ENCODE measurements at regions of chr11 and their contacts with region 1.

Region 1: GRCh38 chr11:63768237-63769043 is at the start of gene ZFTA:
- DNase-seq: peak; percentile 75
- ATAC-seq: peak; percentile 6
- H3K4me3 Mint-ChIP-seq: peak within 1 kb of the TSS; percentile 98
- H3K27ac Mint-ChIP-seq: peak within 1 kb of the TSS; percentile 98
- H3K4me1 Mint-ChIP-seq: peaks cover 37% of the 10 kb centered on the region
- H3K27me3 Mint-ChIP-seq: peaks cover 32% of the 10 kb centered on the region
- CTCF ChIP-seq: peak; percentile 78
- total RNA-seq, gene ZFTA: 44.7 to 47.2 TPM (median 45.6 TPM) in 3 replicates

Region 2: GRCh38 chr11:63779039-63779438 is 10.6 kb after region 1 on chr11:
- CTCF ChIA-PET with region 1: interaction called, 10 read pairs
- POLR2A ChIA-PET with region 1: no interaction called
- DNase-seq: no peak
- ATAC-seq: no peak
- H3K4me3 Mint-ChIP-seq: no peak overlapping the region
- H3K27ac Mint-ChIP-seq: no peak overlapping the region
- H3K4me1 Mint-ChIP-seq: no peaks in the 10 kb centered on the region
- H3K27me3 Mint-ChIP-seq: peaks cover 64% of the 10 kb centered on the region
- CTCF ChIP-seq: no peak

Region 3: GRCh38 chr11:63791495-63792167 is 23.2 kb after region 1 on chr11:
- CTCF ChIA-PET with region 1: no interaction called
- POLR2A ChIA-PET with region 1: no interaction called
- DNase-seq: no peak
- ATAC-seq: no peak
- H3K4me3 Mint-ChIP-seq: no peak overlapping the region
- H3K27ac Mint-ChIP-seq: no peak overlapping the region
- H3K4me1 Mint-ChIP-seq: no peaks in the 10 kb centered on the region
- H3K27me3 Mint-ChIP-seq: peaks cover 18% of the 10 kb centered on the region
- CTCF ChIP-seq: no peak

Region 4: DNA sequence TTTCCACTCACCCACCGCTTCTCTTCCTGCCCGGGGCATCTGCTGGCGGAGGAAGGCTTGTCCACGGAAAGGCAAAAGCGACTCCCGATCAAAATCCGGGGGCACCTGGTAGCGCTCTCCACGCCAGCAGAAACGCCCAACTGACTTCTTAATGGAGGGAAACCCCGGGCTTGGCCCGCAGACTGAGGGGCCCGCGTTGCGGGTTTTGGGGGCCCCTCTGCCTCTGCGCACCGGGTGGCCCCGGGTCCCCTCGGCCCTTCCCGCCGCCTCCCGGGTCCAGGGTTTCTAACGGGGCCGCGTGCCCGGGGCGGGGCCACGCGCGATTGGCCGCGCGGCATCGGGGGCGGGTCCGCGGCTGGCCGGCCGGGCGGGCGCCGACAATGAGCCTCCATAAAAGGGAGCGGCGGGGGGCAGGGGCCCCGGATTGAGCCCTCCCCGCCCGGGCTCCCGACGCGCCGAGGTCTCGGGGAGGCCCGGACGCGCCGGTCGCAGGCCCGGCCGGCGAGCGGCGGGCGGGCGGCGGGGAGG is 44.7 kb after region 1 on chr11 and contains the start of gene SPINDOC:
- CTCF ChIA-PET with region 1: interaction called, 21 read pairs
- POLR2A ChIA-PET with region 1: interaction called, 6 read pairs
- DNase-seq: peak; percentile 75
- ATAC-seq: peak; percentile 64
- H3K4me3 Mint-ChIP-seq: peak within 1 kb of the TSS; percentile 89
- H3K27ac Mint-ChIP-seq: peak within 1 kb of the TSS; percentile 73
- H3K4me1 Mint-ChIP-seq: peaks cover 32% of the 10 kb centered on the region
- H3K27me3 Mint-ChIP-seq: peaks cover 15% of the 10 kb centered on the region
- CTCF ChIP-seq: no peak
- total RNA-seq, gene SPINDOC: 93.8 to 108 TPM (median 106 TPM) in 3 replicates

Measured in WTC11 (cell line).